Left cardiac atrium (tissue), 4 donors: ENCODE measurements at regions of chr3 and their contacts with region 1.

Region 1: DNA sequence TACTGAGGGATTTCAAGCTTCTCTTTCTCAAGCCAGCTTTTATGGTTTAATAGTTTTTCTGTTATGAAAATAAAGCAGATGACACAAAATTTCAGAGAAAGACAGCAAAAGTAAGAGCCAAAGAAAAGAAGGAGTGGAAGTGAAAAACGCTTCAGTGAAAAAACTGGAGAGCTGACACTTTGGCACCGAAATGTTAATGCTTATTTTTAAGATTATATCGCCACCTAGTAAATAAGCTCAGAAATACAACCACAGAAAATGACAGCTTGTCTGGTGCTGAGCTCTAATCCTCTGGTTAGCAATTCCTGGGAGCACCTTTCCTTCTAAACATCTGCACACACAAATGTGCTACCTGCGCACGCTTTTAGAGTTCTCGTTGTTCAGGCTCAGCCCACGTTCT is 101.6 kb downstream of the ZPLD1 start:
- DNase-seq: no peak
- ATAC-seq: peak; percentile 51 to 57

Region 2: DNA sequence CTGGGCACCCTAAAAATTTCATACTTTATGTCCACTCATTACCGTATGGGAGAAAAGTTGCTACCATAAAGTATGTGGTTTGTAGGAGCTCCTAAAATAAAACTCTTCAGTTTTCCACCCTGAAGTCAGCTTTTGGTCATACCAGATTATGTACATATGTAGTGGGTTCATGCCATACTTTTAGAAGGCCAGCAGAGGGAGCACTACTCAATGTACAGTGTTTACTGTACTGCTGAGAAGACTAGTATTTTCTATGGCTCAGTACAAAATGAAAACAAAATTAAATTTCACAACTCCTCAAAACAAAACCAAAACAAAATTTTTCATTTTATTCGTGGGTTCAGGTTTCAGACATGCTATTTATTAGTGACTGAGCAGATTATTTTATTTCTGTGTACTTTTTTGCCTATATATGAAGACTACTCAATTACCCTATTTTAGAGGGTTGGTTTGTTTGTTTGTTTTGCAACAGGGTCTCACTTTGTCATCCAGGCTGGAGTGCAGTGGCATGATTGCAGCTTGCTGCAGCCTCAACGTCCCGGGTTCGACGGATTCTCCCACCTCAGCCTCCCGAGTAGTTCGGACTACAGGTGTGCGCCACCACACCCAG is 733.2 kb before region 1 on chr3:
- intact Hi-C with region 1: loop called (anchors 10 kb)
- DNase-seq: no peak
- ATAC-seq: peak; percentile 88 to 94

Region 3: GRCh38 chr3:102466001-102466400 is 70.5 kb before region 1 on chr3:
- intact Hi-C with region 1: loop called in 1 of 2 experiments (anchors 10 kb)
- DNase-seq: no peak
- ATAC-seq: no peak

Region 4: GRCh38 chr3:102727340-102727739 is 190.9 kb after region 1 on chr3:
- intact Hi-C with region 1: no loop called
- DNase-seq: no peak
- ATAC-seq: no peak